AG04450 (cell line): ENCODE measurements at regions of chr12 and their contacts with region 1.

Region 1: DNA sequence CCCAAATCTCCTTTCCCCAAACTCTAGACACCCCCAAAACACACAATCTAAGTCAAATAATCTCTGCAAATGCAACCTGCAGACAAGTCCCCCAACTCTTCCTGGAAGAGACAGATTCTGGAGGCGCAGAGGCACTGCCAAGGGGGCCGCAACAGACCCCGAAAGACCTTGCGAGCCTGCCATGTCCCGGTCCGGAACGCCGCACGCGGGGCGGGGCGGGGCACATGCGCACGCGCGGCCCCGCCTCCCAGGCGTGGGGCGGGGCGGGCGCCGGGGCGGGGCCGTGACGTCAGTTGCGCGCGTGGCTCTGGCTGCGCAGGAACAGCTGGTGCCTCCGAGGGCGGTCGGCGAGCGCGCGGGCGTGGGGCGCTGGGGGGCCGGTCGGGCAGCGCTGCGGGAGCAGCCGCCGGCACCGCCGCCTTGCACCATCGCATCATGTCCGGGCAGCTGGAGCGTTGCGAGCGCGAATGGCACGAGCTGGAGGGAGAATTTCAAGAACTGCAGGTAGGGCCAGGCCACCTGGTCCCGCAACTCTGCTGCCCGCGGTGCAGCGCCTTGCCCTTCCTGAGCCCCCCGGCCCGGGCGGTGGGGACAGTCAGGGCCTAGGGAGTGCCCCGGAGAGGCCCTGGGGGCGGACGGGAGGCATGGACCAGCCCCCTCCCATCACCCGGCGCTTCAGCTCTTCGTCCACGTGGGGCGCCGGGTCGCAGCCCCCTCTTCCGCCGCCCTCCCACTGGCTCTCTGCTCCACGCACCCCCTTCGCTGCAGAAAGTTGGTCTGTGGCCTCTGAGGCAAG is at the start of gene TMEM120B:
- DNase-seq: no peak
- H3K4me3 ChIP-seq: peak within 1 kb of the TSS; percentile 93
- H3K27ac ChIP-seq: peak within 1 kb of the TSS; percentile 68
- H3K27me3 ChIP-seq: no peaks in the 10 kb centered on the region
- CTCF ChIP-seq: no peak
- polyA plus RNA-seq, gene TMEM120B: 11.1 and 13.3 TPM in 2 replicates

Region 2: GRCh38 chr12:121676190-121676589 is 36.5 kb before region 1 on chr12:
- CTCF ChIA-PET with region 1: no interaction called
- POLR2A ChIA-PET with region 1: no interaction called
- DNase-seq: no peak
- H3K4me3 ChIP-seq: no peak overlapping the region
- H3K27ac ChIP-seq: no peak overlapping the region
- H3K27me3 ChIP-seq: no peaks in the 10 kb centered on the region
- CTCF ChIP-seq: no peak

Region 3: GRCh38 chr12:123478762-123479161 is 1766.1 kb after region 1 on chr12:
- CTCF ChIA-PET with region 1: interaction called, 10 read pairs
- POLR2A ChIA-PET with region 1: no interaction called
- DNase-seq: no peak
- H3K4me3 ChIP-seq: no peak overlapping the region
- H3K27ac ChIP-seq: no peak overlapping the region
- H3K27me3 ChIP-seq: no peaks in the 10 kb centered on the region
- CTCF ChIP-seq: no peak